Naive thymus-derived CD8-positive, alpha-beta T cell (primary cell): ENCODE measurements at regions of chr4 and their contacts with region 1.

Region 1: DNA sequence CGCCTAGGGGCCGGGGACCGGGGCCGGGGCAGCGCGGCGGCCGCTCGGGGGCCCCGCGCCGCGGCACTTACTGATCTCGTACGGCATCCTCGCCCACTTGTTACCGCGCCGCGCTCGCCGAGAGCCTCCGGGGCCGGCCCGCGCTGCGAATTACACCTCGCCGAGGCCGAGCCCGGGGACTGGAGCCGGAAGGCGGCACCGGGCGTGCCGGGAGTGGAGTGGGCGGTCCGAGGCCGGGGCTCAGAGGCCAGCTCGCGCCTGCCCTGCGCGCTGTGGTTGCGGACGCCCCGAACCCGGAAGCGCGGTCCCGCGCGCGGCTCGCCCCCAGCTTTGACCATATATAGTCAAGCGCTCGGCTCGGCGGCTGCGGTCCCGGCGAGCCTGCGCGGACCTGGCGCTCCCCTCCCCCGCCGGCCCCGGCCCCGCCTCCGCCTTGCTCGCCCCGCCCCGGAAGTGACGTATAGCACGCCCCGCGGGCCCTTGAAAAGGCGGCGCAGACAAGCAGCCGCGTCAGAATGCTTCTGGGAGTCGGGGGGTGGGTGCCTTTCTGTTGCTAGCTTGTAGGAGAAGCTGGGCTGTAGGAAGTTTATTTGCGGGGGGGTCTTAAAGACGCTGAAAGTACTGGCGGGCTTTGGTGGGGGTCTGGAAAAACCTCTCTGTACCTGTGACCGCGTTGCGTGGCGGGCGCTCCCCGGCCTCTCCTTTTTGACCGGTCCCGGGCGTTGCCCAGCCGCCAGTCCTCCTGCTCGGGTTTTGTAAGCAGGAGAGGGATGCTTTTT is at the start of gene WDR1:
- DNase-seq: peak; percentile 80 to 97 (median 88)
- ATAC-seq: peak; percentile 72 to 76
- H3K4me3 Mint-ChIP-seq: peak within 1 kb of the TSS; percentile 92 to 98 (median 96)
- H3K27ac Mint-ChIP-seq: peak within 1 kb of the TSS; percentile 96 to 100 (median 99)
- H3K4me1 Mint-ChIP-seq: peaks cover 52 to 84% (median 70%) of the 10 kb centered on the region in 4 donors
- H3K27me3 Mint-ChIP-seq: no peaks in the 10 kb centered on the region
- polyA plus RNA-seq, gene WDR1: 304 to 378 (median 322) TPM

Region 2: GRCh38 chr4:9691238-9692065 is 425.3 kb before region 1 on chr4:
- POLR2A ChIA-PET with region 1: interaction called, 12 read pairs
- DNase-seq: peak; percentile 76 to 93 (median 86)
- ATAC-seq: peak; percentile 98
- H3K4me3 Mint-ChIP-seq: peak overlapping the region; percentile 78 to 90 (median 87)
- H3K27ac Mint-ChIP-seq: peak overlapping the region; percentile 63 to 98 (median 88)
- H3K4me1 Mint-ChIP-seq: peaks cover 13 to 26% (median 24%) of the 10 kb centered on the region in 4 donors
- H3K27me3 Mint-ChIP-seq: peaks cover 0 to 2% (median 0%) of the 10 kb centered on the region in 5 donors

Region 3: DNA sequence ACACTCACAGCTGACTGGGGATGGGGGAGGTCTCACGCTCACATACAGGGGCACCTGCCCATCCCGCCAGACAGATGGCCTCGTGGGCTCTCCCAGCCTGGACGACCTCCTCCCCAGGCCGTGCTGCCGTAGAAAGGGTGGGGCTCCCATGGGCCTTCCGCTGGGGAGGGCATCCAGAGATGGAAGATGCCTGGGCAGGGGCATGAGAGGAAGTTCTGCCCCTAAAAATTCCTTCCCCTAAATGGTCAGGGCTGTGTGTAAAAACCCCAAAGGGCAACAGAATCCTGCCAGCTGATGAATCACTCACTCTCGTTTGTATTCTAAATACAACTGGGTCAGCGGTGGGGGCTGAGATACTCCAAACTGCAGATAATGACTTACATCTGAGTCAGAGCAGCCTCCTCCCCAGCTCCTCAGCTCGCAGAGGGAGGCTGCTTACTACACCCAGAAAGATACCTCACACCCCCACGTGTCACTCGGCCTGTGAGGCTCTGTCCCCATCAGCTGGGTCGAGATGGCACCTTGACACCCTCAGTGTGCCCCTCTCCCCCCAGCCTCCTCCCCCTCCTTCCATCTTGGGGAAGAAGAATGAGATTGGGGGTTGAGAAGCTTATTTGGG is 10.2 kb before region 1 on chr4:
- POLR2A ChIA-PET with region 1: interaction called, 349 read pairs
- DNase-seq: peak in 3 of 10 donors; percentile 30 to 72 (median 61)
- ATAC-seq: peak; percentile 58 to 70
- H3K4me3 Mint-ChIP-seq: peak overlapping the region; percentile 47 to 97 (median 77)
- H3K27ac Mint-ChIP-seq: peak overlapping the region; percentile 77 to 96 (median 92)
- H3K4me1 Mint-ChIP-seq: peaks cover 75 to 100% (median 98%) of the 10 kb centered on the region in 4 donors
- H3K27me3 Mint-ChIP-seq: no peaks in the 10 kb centered on the region

Region 4: GRCh38 chr4:10157478-10158332 is 40.9 kb after region 1 on chr4:
- POLR2A ChIA-PET with region 1: interaction called, 51 read pairs
- DNase-seq: peak in 9 of 10 donors; percentile 11 to 67 (median 34)
- ATAC-seq: peak; percentile 20 to 42
- H3K4me3 Mint-ChIP-seq: peak overlapping the region in 3 of 10 donors; percentile 16 to 26 (median 19)
- H3K27ac Mint-ChIP-seq: peak overlapping the region in 8 of 10 donors; percentile 48 to 83 (median 60)
- H3K4me1 Mint-ChIP-seq: peaks cover 12 to 54% (median 42%) of the 10 kb centered on the region in 4 donors
- H3K27me3 Mint-ChIP-seq: no peaks in the 10 kb centered on the region

Region 5: GRCh38 chr4:10461091-10461849 is 344.5 kb after region 1 on chr4:
- POLR2A ChIA-PET with region 1: interaction called, 25 read pairs
- DNase-seq: peak; percentile 59 to 85 (median 78)
- ATAC-seq: peak; percentile 70 to 73
- H3K4me3 Mint-ChIP-seq: peak overlapping the region; percentile 74 to 91 (median 82)
- H3K27ac Mint-ChIP-seq: peak overlapping the region in 5 of 10 donors; percentile 13 to 77 (median 73)
- H3K4me1 Mint-ChIP-seq: peaks cover 5 to 38% (median 28%) of the 10 kb centered on the region in 4 donors
- H3K27me3 Mint-ChIP-seq: peaks cover 18 to 42% (median 33%) of the 10 kb centered on the region in 5 donors